ENCODE measurements at regions of chr2 and their contacts with region 1.

Region 1: GRCh38 chr2:217836901-217837491 is 165.8 kb downstream of the TNS1 start:
- DNase-seq: peak; percentile 7
- H3K4me3 ChIP-seq: no peak overlapping the region
- H3K27me3 ChIP-seq: no peaks in the 10 kb centered on the region
- CTCF ChIP-seq: peak; percentile 39

Region 2: DNA sequence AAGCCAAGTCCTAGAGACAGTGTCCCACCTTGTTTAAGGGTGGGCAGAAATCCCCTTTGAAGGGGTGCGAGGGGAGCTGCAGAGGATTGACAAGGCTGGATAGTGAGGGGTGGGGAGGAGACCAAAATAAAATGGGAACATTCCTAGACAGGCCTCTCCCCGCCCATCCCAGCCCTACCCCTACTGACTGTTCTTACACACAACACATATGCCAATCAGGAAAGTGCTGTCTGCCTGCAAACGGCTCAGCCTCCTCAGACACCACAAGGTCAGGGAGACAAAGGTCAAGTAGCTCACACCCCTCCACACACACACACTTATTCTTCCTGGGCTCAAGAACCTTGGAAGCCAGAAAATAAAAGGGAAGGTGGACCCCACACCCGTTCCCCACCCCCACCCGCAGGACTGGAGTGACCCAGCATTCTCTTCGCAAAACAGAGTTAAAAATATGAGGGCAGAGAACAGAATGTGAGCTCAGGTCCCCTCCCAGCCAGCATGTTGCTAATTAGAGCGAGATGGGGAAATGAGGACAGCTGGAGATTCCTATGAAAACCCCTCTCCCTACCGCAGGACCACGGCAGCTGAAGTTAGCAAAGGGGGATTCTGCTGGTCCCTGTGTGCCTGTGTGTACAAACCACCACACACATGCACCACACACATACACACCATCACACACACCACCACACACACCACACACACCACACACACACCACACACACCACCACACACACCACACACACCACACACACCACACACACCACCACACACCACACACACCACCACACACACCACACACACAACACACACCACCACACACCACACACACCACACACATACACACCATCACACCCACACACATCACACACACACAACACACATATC is 32.0 kb before region 1 on chr2:
- CTCF ChIA-PET with region 1: no interaction called
- POLR2A ChIA-PET with region 1: no interaction called
- DNase-seq: no peak
- H3K4me3 ChIP-seq: no peak overlapping the region
- H3K27me3 ChIP-seq: no peaks in the 10 kb centered on the region
- CTCF ChIP-seq: no peak

Region 3: GRCh38 chr2:217851191-217852020 is 14.4 kb after region 1 on chr2:
- CTCF ChIA-PET with region 1: interaction called, 10 read pairs
- POLR2A ChIA-PET with region 1: no interaction called
- DNase-seq: peak; percentile 63
- H3K4me3 ChIP-seq: no peak overlapping the region
- H3K27me3 ChIP-seq: no peaks in the 10 kb centered on the region
- CTCF ChIP-seq: no peak